ENCODE measurements at regions of chr2 and their contacts with region 1.

Region 1: GRCh38 chr2:216698895-216699294 is 3.5 kb upstream of the IGFBP5 start:
- DNase-seq: peak; percentile 30 to 50 (median 36)
- ATAC-seq: peak; percentile 87
- H3K4me3 ChIP-seq: no peak overlapping the region
- H3K27ac ChIP-seq: no peak overlapping the region
- H3K4me1 ChIP-seq: peaks cover 0 to 9% of the 10 kb centered on the region in 2 experiments; a peak in 4 of 5 replicates
- H3K27me3 ChIP-seq: no peaks in the 10 kb centered on the region; a peak in 1 of 5 replicates
- CTCF ChIP-seq: peak; percentile 63 to 75 (median 68); a peak in 5 of 6 replicates
- EP300 ChIP-seq: no peak
- POLR2A ChIP-seq: no peak
- RAD21 ChIP-seq: peak; percentile 78 to 87

Region 2: DNA sequence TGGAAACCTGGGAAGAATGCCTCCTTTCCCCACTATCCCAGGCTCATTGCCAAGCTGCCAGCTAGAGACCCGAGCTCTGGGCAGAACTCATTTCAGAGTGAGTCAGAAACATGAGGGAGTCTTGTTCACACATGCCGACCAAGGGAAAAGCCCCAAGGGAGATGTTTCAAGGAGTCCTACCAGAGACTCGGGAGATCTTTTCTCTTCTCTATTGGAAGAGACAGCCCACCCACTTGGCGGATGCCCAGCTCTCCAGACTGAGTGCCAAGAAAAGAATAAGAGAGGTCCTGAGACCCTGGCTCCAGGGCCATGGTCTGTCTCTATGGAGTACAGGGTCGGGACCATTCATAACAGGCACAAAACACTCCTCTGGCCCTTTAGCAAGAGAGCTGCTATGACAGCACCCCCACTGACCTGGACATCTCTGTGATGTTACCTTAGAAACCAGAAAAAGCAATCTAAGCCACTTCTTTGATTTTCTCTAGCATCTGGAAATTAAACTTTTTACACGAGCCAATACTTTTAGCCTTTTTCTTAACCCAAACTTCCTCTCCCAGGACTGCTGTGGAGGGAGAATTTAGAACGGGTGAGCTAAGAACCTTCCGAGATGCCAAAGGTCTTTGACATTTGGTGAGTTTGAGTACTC is 14.9 kb after region 1 on chr2:
- CTCF ChIA-PET with region 1: no interaction called
- POLR2A ChIA-PET with region 1: no interaction called
- in situ Hi-C with region 1: no loop called
- intact Hi-C with region 1: no loop called
- DNase-seq: no peak
- ATAC-seq: no peak
- H3K4me3 ChIP-seq: no peak overlapping the region
- H3K27ac ChIP-seq: no peak overlapping the region
- H3K4me1 ChIP-seq: no peaks in the 10 kb centered on the region
- H3K27me3 ChIP-seq: peaks cover 5 to 53% of the 10 kb centered on the region in 2 experiments
- CTCF ChIP-seq: no peak
- EP300 ChIP-seq: no peak
- POLR2A ChIP-seq: no peak
- RAD21 ChIP-seq: no peak

Region 3: GRCh38 chr2:216740557-216741222 is 41.8 kb after region 1 on chr2:
- CTCF ChIA-PET with region 1: no interaction called
- POLR2A ChIA-PET with region 1: no interaction called
- in situ Hi-C with region 1: no loop called
- intact Hi-C with region 1: no loop called
- DNase-seq: no peak
- ATAC-seq: no peak
- H3K4me3 ChIP-seq: no peak overlapping the region
- H3K27ac ChIP-seq: no peak overlapping the region
- H3K4me1 ChIP-seq: no peaks in the 10 kb centered on the region
- H3K27me3 ChIP-seq: peaks cover 2 to 31% of the 10 kb centered on the region in 2 experiments
- CTCF ChIP-seq: no peak
- EP300 ChIP-seq: no peak
- POLR2A ChIP-seq: no peak
- RAD21 ChIP-seq: no peak

Region 4: DNA sequence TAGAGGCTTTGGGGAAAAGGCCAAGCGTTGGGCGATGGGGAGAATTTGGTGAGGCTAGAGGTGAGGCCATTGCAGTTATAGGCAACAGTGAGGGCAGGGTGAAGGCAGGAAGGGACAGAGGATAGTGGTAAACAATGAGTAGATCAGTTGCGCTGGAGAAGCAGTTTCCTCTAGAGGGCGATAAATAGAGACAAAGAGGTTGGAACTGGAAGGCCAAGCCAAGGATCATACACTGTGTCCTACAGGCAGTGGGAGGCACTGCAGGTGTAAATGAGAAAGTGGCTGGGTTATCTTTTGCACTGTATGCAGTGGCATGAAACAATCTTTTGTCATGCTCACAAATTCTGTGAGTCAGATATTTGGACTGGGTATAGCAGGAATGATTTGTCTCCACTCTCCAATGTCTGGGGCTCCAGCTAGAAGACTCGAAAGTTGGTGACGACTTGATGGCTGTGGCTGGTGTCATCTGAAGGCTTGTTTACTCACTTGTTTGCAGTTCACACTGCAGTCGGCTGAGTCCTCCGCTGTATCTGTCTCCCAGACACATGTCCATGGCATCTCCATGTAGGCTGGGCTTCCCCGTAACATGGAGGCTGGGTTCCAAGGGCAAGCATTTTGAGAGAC is 78.9 kb after region 1 on chr2:
- CTCF ChIA-PET with region 1: no interaction called
- POLR2A ChIA-PET with region 1: no interaction called
- in situ Hi-C with region 1: no loop called
- intact Hi-C with region 1: loop called (anchors 5 kb)
- DNase-seq: peak; percentile 72 to 85 (median 76)
- ATAC-seq: peak; percentile 89
- H3K4me3 ChIP-seq: no peak overlapping the region
- H3K27ac ChIP-seq: no peak overlapping the region
- H3K4me1 ChIP-seq: peaks cover 15 to 33% of the 10 kb centered on the region in 2 experiments; a peak in 4 of 5 replicates
- H3K27me3 ChIP-seq: no peaks in the 10 kb centered on the region
- CTCF ChIP-seq: peak; percentile 92 to 99 (median 99)
- EP300 ChIP-seq: 0 out of 2 replicates have a peak, but pooled peaks have one; percentile 8
- POLR2A ChIP-seq: no peak
- RAD21 ChIP-seq: peak; percentile 84 to 90

Region 5: DNA sequence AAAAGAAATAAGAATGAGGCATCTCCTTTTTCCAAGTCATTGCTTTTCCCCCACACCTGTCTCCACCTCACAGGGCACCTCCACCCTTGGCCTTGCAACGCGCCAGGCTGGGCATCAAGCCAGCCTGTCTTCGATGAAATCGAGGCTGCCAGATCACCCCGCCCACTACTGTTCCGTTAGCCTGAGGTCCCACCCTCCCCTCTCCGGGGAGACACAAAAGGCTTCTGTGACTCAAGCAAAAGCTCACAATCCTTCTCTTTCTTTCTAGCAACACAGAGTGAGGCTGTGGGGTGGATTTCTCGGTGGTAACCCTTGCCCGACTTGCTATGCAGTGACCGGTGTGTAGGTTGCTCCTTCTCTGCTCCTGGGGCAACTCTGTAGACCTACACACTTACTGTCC is 151.1 kb after region 1 on chr2:
- CTCF ChIA-PET with region 1: no interaction called
- POLR2A ChIA-PET with region 1: no interaction called
- in situ Hi-C with region 1: no loop called
- intact Hi-C with region 1: no loop called
- DNase-seq: peak in 3 of 4 experiments; percentile 11 to 31 (median 25)
- ATAC-seq: peak; percentile 71
- H3K4me3 ChIP-seq: no peak overlapping the region
- H3K27ac ChIP-seq: no peak overlapping the region
- H3K4me1 ChIP-seq: peaks cover 4 to 9% of the 10 kb centered on the region in 2 experiments; a peak in 2 of 5 replicates
- H3K27me3 ChIP-seq: no peaks in the 10 kb centered on the region
- CTCF ChIP-seq: no peak
- EP300 ChIP-seq: no peak
- POLR2A ChIP-seq: no peak
- RAD21 ChIP-seq: no peak

Region 6: DNA sequence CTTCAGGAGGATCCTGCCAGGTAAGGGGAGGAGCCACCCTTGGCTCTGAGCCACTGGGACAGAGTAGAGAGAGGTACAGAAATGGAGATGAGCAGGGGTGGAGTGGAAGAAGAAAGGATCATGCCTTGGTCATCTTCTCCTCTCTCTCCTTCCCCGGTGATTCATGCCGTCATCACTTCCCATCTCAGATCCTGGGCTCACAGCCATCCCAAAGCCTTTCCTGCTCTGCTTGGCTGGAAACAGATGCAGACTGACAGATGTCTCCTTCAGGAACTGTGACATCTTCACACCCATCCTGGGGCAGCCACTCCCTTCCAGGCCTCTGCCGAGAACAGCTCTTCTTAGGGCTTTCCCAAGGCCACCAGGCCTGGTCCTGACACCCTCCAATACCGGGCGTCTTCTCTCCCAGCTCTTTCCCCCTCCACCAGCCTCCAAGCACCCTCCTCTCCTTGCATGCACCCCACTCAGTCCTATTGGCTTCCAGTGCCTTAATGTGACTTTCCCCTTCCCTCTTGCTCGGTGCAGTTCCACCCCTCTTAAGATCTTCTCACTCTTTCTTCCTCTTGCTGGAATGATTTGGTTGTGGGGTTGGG is 219.3 kb after region 1 on chr2:
- CTCF ChIA-PET with region 1: interaction called, 3 read pairs
- POLR2A ChIA-PET with region 1: no interaction called
- in situ Hi-C with region 1: no loop called
- intact Hi-C with region 1: loop called (anchors 2 kb)
- DNase-seq: no peak
- ATAC-seq: no peak
- H3K4me3 ChIP-seq: no peak overlapping the region
- H3K27ac ChIP-seq: no peak overlapping the region
- H3K4me1 ChIP-seq: peaks cover 0 to 3% of the 10 kb centered on the region in 2 experiments; a peak in 1 of 5 replicates
- H3K27me3 ChIP-seq: peaks cover 0 to 29% of the 10 kb centered on the region in 2 experiments; a peak in 3 of 5 replicates
- CTCF ChIP-seq: no peak
- EP300 ChIP-seq: no peak
- POLR2A ChIP-seq: no peak
- RAD21 ChIP-seq: no peak

Region 7: GRCh38 chr2:217058791-217059764 is 360.2 kb after region 1 on chr2:
- CTCF ChIA-PET with region 1: no interaction called
- POLR2A ChIA-PET with region 1: no interaction called
- in situ Hi-C with region 1: no loop called
- intact Hi-C with region 1: loop called (anchors 1 kb)
- DNase-seq: peak in 3 of 4 experiments; percentile 11 to 51 (median 46)
- ATAC-seq: peak; percentile 77
- H3K4me3 ChIP-seq: no peak overlapping the region
- H3K27ac ChIP-seq: no peak overlapping the region; the same call in 2 of the 3 replicates
- H3K4me1 ChIP-seq: peaks cover 0 to 27% of the 10 kb centered on the region in 2 experiments; a peak in 3 of 5 replicates
- H3K27me3 ChIP-seq: no peaks in the 10 kb centered on the region
- CTCF ChIP-seq: peak in 2 of 3 experiments; percentile 7 to 41; a peak in 2 of 6 replicates
- EP300 ChIP-seq: peak; percentile 19; the same call in 1 of the 2 replicates
- POLR2A ChIP-seq: no peak
- RAD21 ChIP-seq: peak; percentile 51 to 55

Region 8: DNA sequence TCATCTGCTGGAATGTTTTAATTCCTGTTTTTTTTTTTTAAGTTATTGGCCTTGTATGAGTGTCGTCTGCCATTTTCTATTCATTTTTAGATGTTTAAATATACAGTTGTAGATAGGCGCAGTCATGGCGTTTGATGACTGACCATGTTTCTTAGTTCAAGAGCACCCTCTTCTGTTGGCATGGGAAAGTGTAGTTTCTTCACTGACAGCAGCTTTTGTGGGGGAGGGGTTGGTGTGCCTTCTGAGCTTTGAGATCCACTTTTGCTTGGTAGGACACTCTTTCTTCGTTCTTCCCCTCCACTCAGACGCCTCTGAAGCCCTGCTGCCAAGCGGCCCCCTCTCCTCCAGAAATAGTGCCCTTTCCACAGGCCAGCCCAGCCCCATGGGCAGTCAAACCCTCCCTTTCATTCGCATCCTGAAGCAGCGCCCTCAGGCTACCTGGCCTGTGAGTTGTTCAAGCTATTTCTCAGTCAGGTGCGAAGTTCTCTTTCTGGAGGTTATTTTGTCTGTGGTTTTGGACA is 811.9 kb after region 1 on chr2:
- CTCF ChIA-PET with region 1: no interaction called
- POLR2A ChIA-PET with region 1: no interaction called
- in situ Hi-C with region 1: no loop called
- intact Hi-C with region 1: loop called (anchors 5 kb)
- DNase-seq: peak; percentile 39 to 63 (median 52)
- ATAC-seq: peak; percentile 85
- H3K4me3 ChIP-seq: no peak overlapping the region
- H3K27ac ChIP-seq: no peak overlapping the region
- H3K4me1 ChIP-seq: no peaks in the 10 kb centered on the region
- H3K27me3 ChIP-seq: no peaks in the 10 kb centered on the region
- CTCF ChIP-seq: peak; percentile 63 to 76 (median 64); a peak in 5 of 6 replicates
- EP300 ChIP-seq: no peak
- POLR2A ChIP-seq: no peak
- RAD21 ChIP-seq: peak; percentile 79 to 83